ENCODE measurements at regions of chr12 and their contacts with region 1.

Region 1: GRCh38 chr12:109858764-109859163 is 21.6 kb downstream of the GLTP start:
- DNase-seq: no peak
- ATAC-seq: no peak
- H3K4me3 ChIP-seq: no peak overlapping the region
- H3K27ac ChIP-seq: no peak overlapping the region
- H3K4me1 ChIP-seq: no peaks in the 10 kb centered on the region
- CTCF ChIP-seq: no peak
- EP300 ChIP-seq: no peak
- POLR2A ChIP-seq: no peak
- RAD21 ChIP-seq: no peak

Region 2: DNA sequence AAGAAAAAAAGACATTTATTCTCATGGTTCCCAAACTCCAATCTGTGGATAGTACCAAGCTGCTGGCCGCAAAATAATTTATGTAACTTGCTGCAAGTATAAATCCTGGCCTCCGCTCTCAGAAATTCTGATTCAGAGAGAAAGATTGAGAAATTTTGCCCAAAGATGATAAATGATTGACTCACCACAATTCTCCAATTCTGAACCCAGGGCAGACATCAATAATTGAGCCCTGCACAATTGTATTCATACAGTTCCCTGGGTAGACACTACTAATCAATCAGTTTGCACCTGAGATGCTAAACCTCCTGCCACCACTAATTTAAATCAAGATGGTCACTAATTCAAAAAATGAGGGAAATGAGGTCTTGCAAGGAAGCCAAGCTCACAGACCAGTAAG is 63.7 kb before region 1 on chr12:
- CTCF ChIA-PET with region 1: no interaction called
- POLR2A ChIA-PET with region 1: no interaction called
- DNase-seq: no peak
- ATAC-seq: no peak
- H3K4me3 ChIP-seq: no peak overlapping the region
- H3K27ac ChIP-seq: 0 out of 6 replicates have a peak overlapping the region, but pooled peaks of 1 of the 2 experiments have one; percentile 15
- H3K4me1 ChIP-seq: peaks cover 9% of the 10 kb centered on the region; the same call in 2 of the 3 replicates
- CTCF ChIP-seq: no peak
- EP300 ChIP-seq: no peak
- POLR2A ChIP-seq: no peak
- RAD21 ChIP-seq: no peak

Region 3: GRCh38 chr12:109880016-109880931 is 21.5 kb after region 1 on chr12 and contains the start of gene GLTP:
- CTCF ChIA-PET with region 1: interaction called, 52 read pairs
- POLR2A ChIA-PET with region 1: no interaction called
- DNase-seq: peak; percentile 78 to 88
- ATAC-seq: peak; percentile 94
- H3K4me3 ChIP-seq: peak within 1 kb of the TSS; percentile 81
- H3K27ac ChIP-seq: peak within 1 kb of the TSS; percentile 82 to 90
- H3K4me1 ChIP-seq: peaks cover 43% of the 10 kb centered on the region
- CTCF ChIP-seq: peak; percentile 89
- EP300 ChIP-seq: no peak
- POLR2A ChIP-seq: peak; percentile 30; the same call in 1 of the 2 replicates
- RAD21 ChIP-seq: peak; percentile 53 to 91; a peak in 4 of 5 replicates
- polyA plus RNA-seq, gene GLTP: 18.8 and 19.2 TPM in 2 replicates

Region 4: GRCh38 chr12:109888179-109889020 is 29.6 kb after region 1 on chr12:
- CTCF ChIA-PET with region 1: interaction called, 52 read pairs
- POLR2A ChIA-PET with region 1: no interaction called
- DNase-seq: peak; percentile 66 to 85
- ATAC-seq: peak; percentile 84 to 87
- H3K4me3 ChIP-seq: no peak overlapping the region
- H3K27ac ChIP-seq: peak overlapping the region; percentile 71 to 84
- H3K4me1 ChIP-seq: peaks cover 36% of the 10 kb centered on the region
- CTCF ChIP-seq: no peak
- EP300 ChIP-seq: no peak
- POLR2A ChIP-seq: no peak
- RAD21 ChIP-seq: no peak

Region 5: GRCh38 chr12:110065540-110065939 is 206.8 kb after region 1 on chr12:
- CTCF ChIA-PET with region 1: no interaction called
- POLR2A ChIA-PET with region 1: no interaction called
- DNase-seq: no peak
- ATAC-seq: no peak
- H3K4me3 ChIP-seq: no peak overlapping the region
- H3K27ac ChIP-seq: no peak overlapping the region
- H3K4me1 ChIP-seq: peaks cover 3% of the 10 kb centered on the region
- CTCF ChIP-seq: no peak
- EP300 ChIP-seq: no peak
- POLR2A ChIP-seq: no peak
- RAD21 ChIP-seq: no peak